ENCODE measurements at regions of chr19 and their contacts with region 1.

Region 1: GRCh38 chr19:45643024-45643926 is 4.1 kb upstream of the EML2 start:
- DNase-seq: peak; percentile 75 to 87
- H3K4me3 ChIP-seq: no peak overlapping the region
- H3K27ac ChIP-seq: peak overlapping the region; percentile 88; the same call in 1 of the 2 replicates
- H3K4me1 ChIP-seq: peaks cover 32% of the 10 kb centered on the region
- H3K27me3 ChIP-seq: no peaks in the 10 kb centered on the region
- CTCF ChIP-seq: peak; percentile 100

Region 2: DNA sequence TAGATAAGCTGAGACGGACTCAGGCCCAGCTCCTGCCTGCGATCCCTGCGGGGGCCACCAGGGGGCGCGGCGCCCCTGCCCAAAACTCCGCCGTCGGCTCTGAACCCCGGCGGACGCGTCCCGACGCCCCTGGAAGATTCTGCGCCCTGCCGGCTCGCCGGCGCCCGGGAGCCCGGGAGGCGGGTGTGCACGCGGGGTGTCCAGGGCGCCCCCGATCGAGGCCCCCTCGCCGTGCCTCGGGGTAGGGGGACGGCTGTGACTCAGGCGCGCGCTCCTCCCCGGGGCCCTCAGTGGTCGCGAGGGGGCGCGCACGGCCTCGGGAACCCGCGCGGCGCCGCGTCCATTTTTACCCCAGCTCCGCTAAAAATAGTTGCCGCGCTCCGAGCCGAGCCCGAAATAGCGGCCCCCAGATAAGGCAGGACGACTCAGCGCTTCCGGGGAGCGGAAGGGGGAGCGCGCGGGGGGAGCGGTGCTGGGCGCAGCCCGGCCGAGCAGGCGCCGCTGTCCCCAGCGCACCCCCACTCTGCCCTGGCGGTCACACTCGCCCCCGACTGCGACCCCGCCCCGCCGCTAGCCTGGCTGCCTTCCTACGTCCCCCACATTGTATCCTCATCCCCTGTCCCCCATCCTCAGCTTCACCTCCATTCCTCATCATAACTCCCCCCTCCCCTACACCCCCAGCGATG is 203.6 kb before region 1 on chr19:
- CTCF ChIA-PET with region 1: no interaction called
- POLR2A ChIA-PET with region 1: no interaction called
- intact Hi-C with region 1: loop called (anchors 1 kb)
- DNase-seq: peak in 1 of 2 experiments; percentile 86
- H3K4me3 ChIP-seq: peak overlapping the region; percentile 83
- H3K27ac ChIP-seq: no peak overlapping the region
- H3K4me1 ChIP-seq: peaks cover 17% of the 10 kb centered on the region
- H3K27me3 ChIP-seq: no peaks in the 10 kb centered on the region
- CTCF ChIP-seq: peak; percentile 100

Region 3: GRCh38 chr19:45496349-45496953 is 146.8 kb before region 1 on chr19:
- CTCF ChIA-PET with region 1: interaction called, 3 read pairs
- POLR2A ChIA-PET with region 1: no interaction called
- intact Hi-C with region 1: loop called (anchors 2 kb)
- DNase-seq: peak in 1 of 2 experiments; percentile 45
- H3K4me3 ChIP-seq: peak overlapping the region; percentile 92
- H3K27ac ChIP-seq: no peak overlapping the region
- H3K4me1 ChIP-seq: peaks cover 14% of the 10 kb centered on the region; the same call in 1 of the 2 replicates
- H3K27me3 ChIP-seq: no peaks in the 10 kb centered on the region
- CTCF ChIP-seq: no peak

Region 4: DNA sequence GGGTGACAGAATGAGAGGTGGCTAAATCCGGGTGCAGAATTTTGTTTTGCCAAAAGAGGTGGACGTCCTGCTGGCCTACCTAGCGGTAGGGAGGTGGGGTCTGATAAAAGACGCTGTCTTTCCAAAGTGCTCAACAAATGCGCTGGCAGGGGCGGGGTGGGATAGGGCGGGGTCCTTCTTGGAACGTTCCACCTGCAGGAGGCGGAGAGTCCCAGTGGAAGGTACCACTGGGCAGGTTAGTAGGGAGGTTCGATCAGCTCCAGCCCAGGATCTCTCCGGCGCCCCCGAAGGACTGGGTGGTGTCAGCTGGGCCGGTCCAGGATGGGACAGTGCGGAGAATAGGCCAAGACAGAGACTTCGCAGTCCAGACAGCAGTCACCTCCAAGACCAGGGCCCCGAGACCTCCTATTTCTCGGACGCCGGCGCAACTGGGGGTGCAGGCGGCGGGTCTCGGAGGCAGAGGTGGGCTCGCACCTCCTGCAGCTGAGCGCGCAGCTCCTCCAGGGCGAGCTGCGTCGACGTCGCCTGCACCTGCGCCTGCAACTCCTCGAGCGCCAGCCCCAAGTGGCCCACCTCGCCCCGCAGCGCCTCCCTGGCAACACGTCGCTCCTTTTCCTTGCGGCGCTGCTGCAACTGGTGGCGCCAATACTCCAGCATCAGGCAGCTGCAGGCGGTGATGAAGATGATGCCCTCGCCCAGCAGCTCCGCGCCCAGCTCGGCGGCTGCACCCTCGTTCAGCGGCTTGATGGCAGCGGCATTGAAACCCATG is 114.4 kb before region 1 on chr19:
- CTCF ChIA-PET with region 1: interaction called, 12 read pairs
- POLR2A ChIA-PET with region 1: no interaction called
- intact Hi-C with region 1: loop called (anchors 1 kb)
- DNase-seq: peak; percentile 82 to 85
- H3K4me3 ChIP-seq: peak overlapping the region; percentile 80
- H3K27ac ChIP-seq: peak overlapping the region; percentile 88
- H3K4me1 ChIP-seq: peaks cover 24% of the 10 kb centered on the region
- H3K27me3 ChIP-seq: no peaks in the 10 kb centered on the region
- CTCF ChIP-seq: peak; percentile 34; the same call in 1 of the 2 replicates

Region 5: GRCh38 chr19:45607071-45608029 is 35.9 kb before region 1 on chr19:
- CTCF ChIA-PET with region 1: interaction called, 3 read pairs
- POLR2A ChIA-PET with region 1: no interaction called
- intact Hi-C with region 1: loop called (anchors 2 kb)
- DNase-seq: peak; percentile 50 to 66
- H3K4me3 ChIP-seq: no peak overlapping the region
- H3K27ac ChIP-seq: no peak overlapping the region
- H3K4me1 ChIP-seq: no peaks in the 10 kb centered on the region
- H3K27me3 ChIP-seq: peaks cover 2% of the 10 kb centered on the region; the same call in 1 of the 2 replicates
- CTCF ChIP-seq: peak; percentile 96

Region 6: GRCh38 chr19:45657520-45658167 is 14.4 kb after region 1 on chr19:
- CTCF ChIA-PET with region 1: interaction called, 13 read pairs
- POLR2A ChIA-PET with region 1: interaction called, 3 read pairs
- intact Hi-C with region 1: no loop called
- DNase-seq: no peak
- H3K4me3 ChIP-seq: no peak overlapping the region
- H3K27ac ChIP-seq: no peak overlapping the region
- H3K4me1 ChIP-seq: no peaks in the 10 kb centered on the region
- H3K27me3 ChIP-seq: 0 out of 2 replicates have a peak, but pooled peaks cover 3% of the 10 kb centered on the region
- CTCF ChIP-seq: no peak

Region 7: DNA sequence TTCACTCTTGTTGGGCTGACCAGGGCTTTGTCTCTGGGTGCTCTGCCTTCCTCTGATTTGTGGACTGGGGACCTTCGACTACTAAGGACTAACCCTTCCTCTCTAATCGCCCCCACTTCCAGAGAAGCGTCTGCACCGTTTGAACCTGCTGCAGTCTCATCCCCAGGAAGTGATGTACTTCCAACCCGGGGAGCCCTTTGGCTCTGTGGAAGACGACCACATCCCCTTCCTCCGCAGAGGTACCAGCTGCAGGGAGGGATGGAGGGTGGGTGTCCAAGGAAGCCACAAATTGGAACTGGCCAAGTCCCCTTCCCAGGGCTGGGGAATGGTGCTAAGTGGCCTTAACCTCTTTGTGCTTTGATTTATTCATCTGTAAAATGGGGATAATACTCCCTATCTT is 58.4 kb after region 1 on chr19:
- CTCF ChIA-PET with region 1: no interaction called
- POLR2A ChIA-PET with region 1: no interaction called
- intact Hi-C with region 1: no loop called
- DNase-seq: no peak
- H3K4me3 ChIP-seq: no peak overlapping the region
- H3K27ac ChIP-seq: no peak overlapping the region
- H3K4me1 ChIP-seq: 0 out of 2 replicates have a peak, but pooled peaks cover 7% of the 10 kb centered on the region
- H3K27me3 ChIP-seq: no peaks in the 10 kb centered on the region
- CTCF ChIP-seq: no peak

Region 8: GRCh38 chr19:45717166-45717982 is 74.1 kb after region 1 on chr19:
- CTCF ChIA-PET with region 1: no interaction called
- POLR2A ChIA-PET with region 1: interaction called, 23 read pairs
- intact Hi-C with region 1: no loop called
- DNase-seq: peak; percentile 99
- H3K4me3 ChIP-seq: peak overlapping the region; percentile 87
- H3K27ac ChIP-seq: peak overlapping the region; percentile 75
- H3K4me1 ChIP-seq: peaks cover 35% of the 10 kb centered on the region
- H3K27me3 ChIP-seq: no peaks in the 10 kb centered on the region
- CTCF ChIP-seq: no peak; the same call in 1 of the 2 replicates

Measured in PC-9 (cell line).